Activated CD4-positive, alpha-beta T cell treated with anti-CD3 and anti-CD28 coated beads, Interleukin-2, amount 10 ng/mL, durations not matched to agents 7 days and 5 days (primary cell): ENCODE measurements at regions of chr2 and their contacts with region 1.

Region 1: GRCh38 chr2:64807417-64807816 is 153.7 kb upstream of the SERTAD2 start:
- DNase-seq: no peak
- H3K4me3 Mint-ChIP-seq: no peak overlapping the region
- H3K27ac Mint-ChIP-seq: no peak overlapping the region
- H3K4me1 Mint-ChIP-seq: peaks cover 11% of the 10 kb centered on the region
- H3K27me3 Mint-ChIP-seq: no peaks in the 10 kb centered on the region

Region 2: DNA sequence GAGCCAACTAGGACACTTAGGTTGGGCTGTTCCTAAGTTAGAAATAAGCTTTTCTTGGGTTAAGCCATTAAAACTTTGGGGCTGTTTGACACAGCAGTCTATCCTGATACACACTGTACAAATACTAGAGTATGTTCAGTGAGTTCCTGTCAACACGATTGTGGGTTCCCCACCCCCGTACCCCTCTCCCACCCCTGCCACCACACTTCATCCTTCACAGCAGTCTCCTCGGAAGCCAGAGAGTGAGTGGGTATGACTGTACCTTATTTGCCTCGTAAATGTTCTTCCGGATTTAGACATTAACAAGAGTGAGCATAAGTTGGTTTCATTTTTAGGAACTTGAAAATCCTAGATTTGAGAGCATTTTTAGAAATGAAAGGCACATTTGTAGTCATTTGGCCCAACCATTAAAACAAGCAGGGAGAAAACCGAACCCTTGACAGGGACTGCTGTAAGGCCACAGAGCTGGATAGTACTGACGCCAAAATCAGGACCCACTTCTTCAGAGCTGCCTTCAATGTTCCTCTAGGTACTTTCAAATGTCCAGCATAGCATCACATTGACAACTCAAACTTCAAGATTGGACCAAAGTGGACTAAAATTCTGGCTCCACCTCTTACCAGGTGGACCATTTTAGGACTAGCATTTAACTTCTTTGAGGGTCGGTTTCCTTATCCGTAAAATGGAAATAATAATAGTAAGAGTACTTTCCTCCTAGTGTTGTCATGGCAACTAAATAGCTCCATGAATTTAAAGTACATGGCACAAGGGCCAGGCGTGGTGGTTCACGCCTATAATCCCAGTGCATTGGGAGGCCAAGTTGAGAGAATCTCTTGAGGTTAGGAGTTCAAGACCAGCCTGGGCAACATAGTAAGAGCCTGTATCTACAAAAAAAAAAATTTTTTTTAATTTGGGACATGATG is 12.6 kb after region 1 on chr2:
- CTCF ChIA-PET with region 1: interaction called, 16 read pairs
- POLR2A ChIA-PET with region 1: no interaction called
- DNase-seq: peak; percentile 55
- H3K4me3 Mint-ChIP-seq: peak overlapping the region; percentile 47
- H3K27ac Mint-ChIP-seq: peak overlapping the region; percentile 89
- H3K4me1 Mint-ChIP-seq: peaks cover 20% of the 10 kb centered on the region
- H3K27me3 Mint-ChIP-seq: no peaks in the 10 kb centered on the region